ENCODE measurements at regions of chr16 and their contacts with region 1.

Region 1: DNA sequence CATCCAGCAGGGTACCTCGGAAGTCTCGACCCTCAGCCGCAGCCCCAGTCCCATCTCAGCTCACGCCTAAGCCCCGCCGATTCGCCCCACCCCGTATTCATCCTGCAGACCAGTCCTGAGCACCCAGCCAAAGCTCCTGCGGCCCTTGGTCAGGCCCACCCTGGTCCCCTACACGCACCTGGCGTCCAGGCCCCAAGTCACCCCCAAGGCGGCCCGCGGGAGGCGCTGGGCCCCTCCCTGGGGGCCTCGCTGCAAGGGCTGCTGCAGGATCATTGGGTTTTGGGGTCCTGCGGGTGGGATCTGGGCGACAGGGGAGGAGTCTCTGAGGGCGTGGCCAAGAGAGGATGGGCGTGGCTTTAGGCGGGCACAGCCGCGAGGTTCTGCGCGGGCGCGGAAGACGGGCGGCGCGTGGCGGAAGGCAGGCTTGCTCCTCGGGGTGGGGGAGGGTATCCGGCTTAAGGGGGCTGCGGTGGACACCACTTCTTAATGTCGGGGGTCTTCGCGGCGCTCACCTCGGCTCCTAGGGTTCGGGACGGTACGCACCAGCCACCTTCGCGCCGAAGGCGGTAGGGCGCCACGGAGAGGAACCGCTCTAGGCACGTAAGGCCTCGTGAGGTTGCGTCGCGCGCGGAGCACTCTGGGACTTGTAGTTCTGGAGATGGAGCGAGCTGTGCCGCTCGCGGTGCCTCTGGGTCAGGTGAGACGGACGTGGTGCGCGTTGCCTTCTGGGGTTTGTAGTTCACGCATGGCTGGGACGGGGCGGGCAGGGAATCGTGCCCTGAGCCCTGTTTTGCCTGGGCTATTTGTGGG is at the starts of genes HCFC1R1 and THOC6:
- DNase-seq: peak; percentile 80
- H3K4me3 ChIP-seq: peak within 1 kb of the TSS; percentile 75
- CTCF ChIP-seq: no peak

Region 2: DNA sequence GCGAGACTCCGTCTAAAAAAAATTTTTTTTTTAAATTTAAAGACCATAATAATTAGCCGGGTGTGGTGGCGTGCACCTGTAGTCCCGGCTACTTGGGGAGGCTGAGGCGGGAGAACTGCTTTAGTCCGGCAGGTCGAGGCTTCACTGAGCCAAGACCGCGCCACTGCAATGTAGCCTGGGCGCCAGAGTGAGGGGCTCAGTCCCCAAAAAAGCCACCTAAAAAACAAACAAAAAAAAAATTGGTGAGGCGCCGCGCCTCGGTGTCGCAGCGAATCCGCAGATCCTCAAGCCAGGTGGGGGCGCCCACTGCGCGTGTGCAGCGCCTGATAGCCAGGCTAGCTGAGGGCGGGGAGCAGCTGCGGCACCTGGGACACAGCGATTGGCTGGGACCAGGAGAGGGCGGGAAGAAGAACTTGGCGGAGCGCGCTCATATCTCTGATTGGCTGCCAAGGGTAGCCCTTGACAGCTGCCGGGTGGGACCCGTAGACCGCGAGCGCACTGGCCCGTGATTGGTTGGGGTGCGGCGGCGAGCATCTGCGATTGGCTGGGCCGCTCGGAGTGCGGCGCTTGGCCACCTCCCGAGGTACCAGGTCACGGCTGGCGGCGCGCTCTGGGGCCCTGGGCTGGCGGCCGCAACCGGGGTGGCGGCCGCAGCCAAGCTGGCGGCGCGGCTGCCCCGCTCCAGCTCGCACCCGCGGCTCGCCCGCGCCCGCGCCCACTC is 20.1 kb before region 1 on chr16:
- CTCF ChIA-PET with region 1: interaction called, 112 read pairs
- POLR2A ChIA-PET with region 1: interaction called, 14 read pairs
- DNase-seq: peak; percentile 84
- H3K4me3 ChIP-seq: no peak overlapping the region
- CTCF ChIP-seq: peak; percentile 61

Region 3: DNA sequence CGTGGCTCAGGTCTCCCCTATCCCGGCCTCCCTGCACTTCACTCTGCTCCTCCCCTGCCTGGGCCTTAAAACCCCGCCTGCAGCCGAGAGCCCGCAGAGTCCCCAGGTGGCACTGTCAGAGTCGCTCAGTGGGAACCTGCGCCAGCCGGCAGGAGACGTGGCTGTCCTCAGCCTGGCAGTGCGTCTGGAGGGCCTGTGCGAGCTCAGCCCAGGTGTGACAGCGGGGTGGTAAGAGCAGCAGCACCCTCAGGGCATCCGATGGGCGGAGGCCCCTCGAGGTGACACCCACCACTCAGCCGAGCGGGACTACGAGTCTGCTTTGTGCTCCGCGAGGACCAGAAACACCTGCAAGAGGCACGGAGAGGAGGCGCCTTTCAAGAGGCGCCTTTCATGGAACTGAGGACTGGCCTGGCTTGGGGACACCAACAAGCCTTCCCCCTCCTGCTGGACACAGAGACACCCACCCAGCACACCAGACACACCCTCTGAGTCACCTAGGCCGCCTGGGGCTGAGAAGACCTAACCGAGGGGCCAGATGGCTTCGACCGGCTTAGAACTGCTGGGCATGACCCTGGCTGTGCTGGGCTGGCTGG is 10.9 kb before region 1 on chr16 and contains the start of gene CLDN9:
- CTCF ChIA-PET with region 1: interaction called, 112 read pairs
- POLR2A ChIA-PET with region 1: interaction called, 10 read pairs
- DNase-seq: no peak
- H3K4me3 ChIP-seq: no peak within 1 kb of the TSS
- CTCF ChIP-seq: no peak

Region 4: GRCh38 chr16:3045357-3045728 is 21.5 kb after region 1 on chr16:
- CTCF ChIA-PET with region 1: interaction called, 146 read pairs
- POLR2A ChIA-PET with region 1: interaction called, 4 read pairs
- DNase-seq: no peak
- H3K4me3 ChIP-seq: peak overlapping the region; percentile 43
- CTCF ChIP-seq: no peak

Region 5: DNA sequence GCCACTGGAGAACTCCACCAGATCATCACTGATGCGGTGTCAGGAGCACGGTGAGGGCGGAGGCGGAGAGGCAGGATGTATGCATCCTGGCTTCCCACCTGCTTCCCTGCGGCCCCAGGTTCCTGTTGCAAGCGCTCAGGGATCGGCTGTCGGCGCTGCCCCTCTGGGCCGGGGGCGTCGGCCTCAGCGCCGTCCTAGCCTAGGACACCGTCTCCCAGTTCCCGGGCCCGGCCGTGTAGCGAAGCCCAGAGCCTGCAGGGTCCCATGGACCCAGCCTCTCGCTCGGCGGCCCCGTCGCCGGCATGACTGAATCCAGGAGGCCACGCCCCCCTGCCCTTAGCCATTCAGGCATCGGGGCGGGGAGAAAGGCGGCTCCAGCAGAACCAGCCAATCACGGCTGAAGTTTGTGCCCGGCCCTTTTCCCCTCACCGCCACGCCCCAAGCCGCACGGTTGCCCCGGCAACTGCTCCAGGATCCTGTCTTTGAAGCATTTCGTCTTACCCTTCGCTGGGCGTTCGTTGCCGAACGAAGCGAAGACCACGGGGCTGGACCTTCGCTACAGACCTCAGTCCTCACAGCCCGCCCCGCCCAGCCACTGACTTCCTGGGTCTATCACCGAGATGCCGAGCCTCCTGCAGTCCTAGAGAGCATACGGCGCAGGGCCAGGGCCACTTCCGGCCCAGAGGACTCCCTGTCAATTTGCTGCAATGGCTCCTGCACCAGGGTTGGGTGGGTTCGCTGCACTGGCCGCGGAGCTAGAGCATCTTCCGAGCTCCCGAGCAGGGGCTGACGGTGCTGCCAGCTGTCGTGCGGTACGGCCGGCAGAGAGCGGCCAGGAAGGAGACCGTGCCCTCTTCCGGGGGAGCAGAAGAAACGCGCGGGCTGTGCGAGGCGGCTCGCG is 100.4 kb after region 1 on chr16:
- CTCF ChIA-PET with region 1: interaction called, 169 read pairs
- POLR2A ChIA-PET with region 1: interaction called, 3 read pairs
- DNase-seq: peak; percentile 29
- H3K4me3 ChIP-seq: peak overlapping the region; percentile 85
- CTCF ChIP-seq: peak; percentile 20

Measured in AG04449 (cell line).